Activated T-helper 1 cell treated with anti-CD3 and anti-CD28 coated beads, Interleukin-12 subunit alpha, Interleukin-12 subunit beta, Interleukin-2, Interleukin-4 antibody, amounts not matched to agents 30 ng/mL and 10 ng/mL and 1 ng/mL, durations not matched to agents 14 hours and 24 hours and 36 hours (primary cell): ENCODE measurements at regions of chr11 and their contacts with region 1.

Region 1: GRCh38 chr11:110195845-110196754 is 100.3 kb downstream of the RDX start:
- DNase-seq: no peak
- H3K4me3 Mint-ChIP-seq: no peak overlapping the region
- H3K27ac Mint-ChIP-seq: no peak overlapping the region
- H3K4me1 Mint-ChIP-seq: peaks cover 15% of the 10 kb centered on the region
- H3K27me3 Mint-ChIP-seq: peaks cover 34% of the 10 kb centered on the region

Region 2: GRCh38 chr11:109964487-109964886 is 231.6 kb before region 1 on chr11:
- intact Hi-C with region 1: no loop called
- DNase-seq: no peak
- H3K4me3 Mint-ChIP-seq: no peak overlapping the region
- H3K27ac Mint-ChIP-seq: no peak overlapping the region
- H3K4me1 Mint-ChIP-seq: peaks cover 15% of the 10 kb centered on the region
- H3K27me3 Mint-ChIP-seq: peaks cover 4% of the 10 kb centered on the region

Region 3: DNA sequence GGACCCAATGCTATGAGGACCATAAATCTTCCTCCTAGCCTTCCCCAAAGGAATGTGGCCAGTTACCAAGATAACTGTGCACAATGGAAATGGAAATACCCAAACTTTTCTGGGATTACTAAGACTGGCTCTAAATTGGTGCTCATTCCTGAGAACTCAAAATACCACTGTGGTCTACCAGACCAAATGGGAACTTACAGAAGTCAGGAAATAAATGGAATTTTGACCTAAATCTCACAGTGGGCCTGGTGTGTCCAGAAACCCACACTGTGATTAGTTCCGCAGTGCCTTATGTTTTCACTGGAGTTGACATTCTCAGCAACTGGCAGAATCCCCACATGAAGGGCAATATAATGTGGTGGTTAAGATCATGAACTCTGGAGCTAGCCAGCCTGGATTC is 202.3 kb before region 1 on chr11:
- intact Hi-C with region 1: no loop called
- DNase-seq: no peak
- H3K4me3 Mint-ChIP-seq: no peak overlapping the region
- H3K27ac Mint-ChIP-seq: no peak overlapping the region
- H3K4me1 Mint-ChIP-seq: no peaks in the 10 kb centered on the region
- H3K27me3 Mint-ChIP-seq: peaks cover 7% of the 10 kb centered on the region

Region 4: DNA sequence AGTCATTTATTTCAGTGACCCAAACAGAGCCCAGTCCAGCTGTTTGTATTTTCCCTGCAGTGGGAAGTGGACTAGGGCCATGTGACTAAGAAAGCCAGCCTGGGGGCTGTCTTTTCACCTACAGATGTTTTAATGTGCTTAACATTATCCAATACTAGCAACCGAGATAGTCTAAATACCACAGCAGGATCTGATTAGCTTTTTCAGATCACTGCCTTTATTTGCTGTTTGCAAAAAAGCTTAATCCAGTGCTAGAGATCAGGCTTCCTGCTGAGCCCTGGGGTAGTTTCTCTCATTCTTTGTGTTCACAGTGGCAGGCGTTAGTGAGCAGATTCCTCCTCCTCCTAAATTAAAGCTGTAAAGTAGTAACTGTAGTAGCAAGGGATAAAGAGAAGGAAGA is 67.9 kb before region 1 on chr11:
- intact Hi-C with region 1: no loop called
- DNase-seq: no peak
- H3K4me3 Mint-ChIP-seq: no peak overlapping the region
- H3K27ac Mint-ChIP-seq: no peak overlapping the region
- H3K4me1 Mint-ChIP-seq: no peaks in the 10 kb centered on the region
- H3K27me3 Mint-ChIP-seq: peaks cover 11% of the 10 kb centered on the region

Region 5: DNA sequence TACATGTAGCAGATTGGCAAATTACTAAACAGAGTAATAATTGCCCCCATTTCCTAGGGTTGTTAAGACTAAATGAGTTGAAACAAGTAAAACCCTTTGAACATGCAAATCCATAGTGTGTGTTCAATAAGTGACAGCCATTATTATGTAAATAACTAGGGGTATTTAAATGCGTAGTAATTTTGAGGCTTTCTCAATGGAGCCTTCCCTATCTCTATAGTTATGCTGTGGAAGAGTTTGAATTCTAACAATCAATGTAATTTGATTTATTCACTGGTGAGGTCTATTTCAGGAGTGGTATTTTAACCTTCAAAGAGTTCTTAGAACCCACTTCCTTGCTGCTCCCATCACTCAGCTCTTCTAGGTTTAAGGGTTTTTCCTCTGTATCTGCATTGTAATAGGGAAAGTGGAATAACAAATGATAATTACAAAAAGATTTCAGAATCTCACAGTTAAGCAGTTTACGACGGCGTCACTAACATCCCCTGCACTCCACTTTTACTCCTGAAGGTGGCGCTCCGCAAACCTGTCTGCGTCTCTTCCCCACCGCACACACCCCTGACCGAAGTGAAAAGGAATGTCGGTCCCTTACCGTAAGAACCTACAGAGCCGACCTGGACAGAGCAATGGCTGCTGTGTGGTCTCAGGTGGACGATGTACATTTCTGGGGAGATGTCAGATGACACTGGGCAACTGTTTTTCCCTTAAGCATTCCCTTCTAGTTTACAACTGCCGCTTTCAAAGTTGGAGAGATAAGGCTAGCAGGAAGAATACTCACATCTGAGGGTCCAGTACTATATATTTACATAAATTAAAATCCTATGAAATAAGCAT is 22.1 kb before region 1 on chr11:
- intact Hi-C with region 1: loop called (anchors 2 kb)
- DNase-seq: peak; percentile 25
- H3K4me3 Mint-ChIP-seq: no peak overlapping the region
- H3K27ac Mint-ChIP-seq: no peak overlapping the region
- H3K4me1 Mint-ChIP-seq: peaks cover 15% of the 10 kb centered on the region
- H3K27me3 Mint-ChIP-seq: peaks cover 21% of the 10 kb centered on the region

Region 6: DNA sequence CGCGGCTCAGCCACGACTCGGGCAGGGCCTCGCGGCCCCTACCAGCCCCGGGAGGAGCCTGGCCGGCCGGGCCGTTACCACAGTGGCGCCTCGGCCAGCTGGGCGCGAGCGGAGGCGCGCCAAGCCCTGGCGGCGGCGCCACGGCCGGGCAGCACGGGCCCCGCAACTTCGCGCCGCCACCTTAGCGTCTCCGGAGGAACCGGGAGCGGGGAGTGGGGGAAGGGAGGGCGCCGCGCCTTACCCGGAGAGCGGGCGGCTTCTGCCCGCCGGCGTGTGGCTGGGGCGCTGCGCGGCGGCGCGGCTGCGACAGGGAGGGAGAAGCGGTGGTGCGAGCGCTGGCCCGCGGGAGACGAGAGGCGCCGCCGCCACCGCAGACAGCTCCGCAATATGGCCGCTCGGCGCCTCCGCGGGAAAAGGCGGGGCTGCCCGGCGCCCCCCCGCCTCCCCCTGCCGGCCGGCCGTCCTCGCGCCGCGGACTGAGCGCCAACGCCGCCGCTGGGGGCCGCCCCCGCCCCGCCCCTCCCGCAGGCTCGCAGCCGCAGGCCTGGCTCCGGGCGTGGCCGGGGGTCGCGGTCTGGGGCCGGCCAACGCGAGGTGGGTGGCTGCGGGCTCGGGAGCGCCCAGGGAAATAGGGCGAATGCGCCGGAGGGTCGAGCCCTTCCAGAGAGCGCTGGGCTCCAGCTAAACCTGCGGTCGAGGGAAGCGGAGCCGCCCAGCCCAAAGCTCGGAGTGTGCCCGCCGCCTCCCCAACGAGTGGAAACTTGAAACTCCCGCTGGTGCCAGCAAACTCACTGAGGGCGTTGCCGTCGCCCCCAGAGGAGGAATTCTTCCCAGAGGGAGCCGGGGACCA is 100.4 kb after region 1 on chr11 and contains the start of gene RDX:
- intact Hi-C with region 1: loop called (anchors 2 kb)
- DNase-seq: peak; percentile 63
- H3K4me3 Mint-ChIP-seq: peak within 1 kb of the TSS; percentile 86
- H3K27ac Mint-ChIP-seq: peak within 1 kb of the TSS; percentile 65
- H3K4me1 Mint-ChIP-seq: peaks cover 54% of the 10 kb centered on the region
- H3K27me3 Mint-ChIP-seq: no peaks in the 10 kb centered on the region
- total RNA-seq, gene RDX: 94.6 and 98.9 TPM in 2 replicates

Region 7: DNA sequence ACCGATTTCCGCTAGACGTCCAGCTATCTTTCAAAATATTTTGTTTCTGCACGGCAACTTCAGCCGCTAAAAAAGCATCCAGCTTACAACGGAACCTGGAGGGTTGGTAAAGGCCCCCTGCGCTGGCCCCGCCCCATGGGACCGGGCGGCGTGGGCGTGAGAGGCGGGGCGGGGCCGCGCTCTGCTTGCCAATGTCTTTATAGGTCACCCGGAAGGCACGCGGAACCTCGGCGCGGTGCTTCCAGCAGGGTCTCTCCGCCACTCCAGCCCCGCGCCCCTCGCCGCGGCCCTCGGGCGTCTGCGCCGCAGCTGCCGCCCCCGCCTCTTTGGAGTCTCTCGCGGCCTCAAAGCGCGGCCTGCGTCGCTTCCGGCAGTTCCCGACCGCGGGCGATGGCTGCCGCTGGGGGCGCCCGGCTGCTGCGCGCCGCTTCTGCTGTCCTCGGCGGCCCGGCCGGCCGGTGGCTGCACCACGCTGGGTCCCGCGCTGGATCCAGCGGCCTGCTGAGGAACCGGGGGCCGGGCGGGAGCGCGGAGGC is 233.7 kb after region 1 on chr11 and contains the start of gene FDX1:
- intact Hi-C with region 1: loop called (anchors 1 kb)
- DNase-seq: peak; percentile 82
- H3K4me3 Mint-ChIP-seq: peak within 1 kb of the TSS; percentile 99
- H3K27ac Mint-ChIP-seq: peak within 1 kb of the TSS; percentile 98
- H3K4me1 Mint-ChIP-seq: peaks cover 51% of the 10 kb centered on the region
- H3K27me3 Mint-ChIP-seq: no peaks in the 10 kb centered on the region
- total RNA-seq, gene FDX1: 14.2 and 15.9 TPM in 2 replicates

Region 8: DNA sequence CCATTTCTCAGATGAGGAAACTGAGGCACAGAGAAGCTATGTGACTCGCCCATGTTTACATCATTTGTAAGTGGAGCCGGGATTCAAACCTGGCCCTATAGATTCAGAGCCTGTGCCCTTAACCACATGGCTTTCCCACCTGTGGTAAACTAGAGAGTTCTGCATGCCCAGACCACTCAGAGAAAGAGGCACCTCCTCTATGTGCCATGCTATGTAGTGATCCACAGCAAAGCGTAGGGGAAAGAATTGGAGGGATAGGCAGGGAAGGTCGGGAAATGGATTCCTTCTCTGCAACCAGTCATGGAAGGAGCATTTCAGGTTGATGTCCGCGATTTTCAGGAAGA is 1034.0 kb after region 1 on chr11:
- intact Hi-C with region 1: loop called (anchors 1 kb)
- DNase-seq: no peak
- H3K4me3 Mint-ChIP-seq: peak overlapping the region; percentile 67
- H3K27ac Mint-ChIP-seq: no peak overlapping the region
- H3K4me1 Mint-ChIP-seq: peaks cover 31% of the 10 kb centered on the region
- H3K27me3 Mint-ChIP-seq: peaks cover 12% of the 10 kb centered on the region